H1 (cell line): ENCODE measurements at regions of chr10 and their contacts with region 1.

Region 1: GRCh38 chr10:93224005-93224779 is 150.5 kb downstream of the CYP26A1 start:
- DNase-seq: no peak
- H3K4me3 ChIP-seq: no peak overlapping the region
- H3K27ac ChIP-seq: no peak overlapping the region
- H3K4me1 ChIP-seq: no peaks in the 10 kb centered on the region; a peak in 1 of 7 replicates
- H3K27me3 ChIP-seq: no peaks in the 10 kb centered on the region
- CTCF ChIP-seq: peak; percentile 12 to 25 (median 18); a peak in 3 of 4 replicates
- EP300 ChIP-seq: no peak
- POLR2A ChIP-seq: no peak
- RAD21 ChIP-seq: peak; percentile 39 to 57

Region 2: DNA sequence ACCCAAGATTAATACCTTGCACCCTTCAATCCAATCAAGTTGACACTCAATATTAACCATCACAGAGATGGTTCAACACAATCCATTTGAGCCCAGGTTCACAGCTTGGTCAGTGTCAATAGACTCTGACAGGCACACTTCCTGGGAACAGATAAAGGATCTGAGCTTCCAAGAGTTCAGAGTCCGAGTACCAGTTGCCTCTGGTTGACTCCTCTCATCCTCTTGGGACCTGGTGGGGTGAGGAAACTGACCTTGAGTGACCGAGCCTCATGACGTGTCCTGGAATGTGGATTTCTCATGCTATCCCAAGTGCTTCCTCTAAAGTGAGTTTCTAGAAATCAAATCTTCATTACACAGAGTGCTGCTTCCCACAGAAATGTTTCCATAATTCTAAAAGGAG is 11.5 kb after region 1 on chr10:
- CTCF ChIA-PET with region 1: interaction called, 31 read pairs
- POLR2A ChIA-PET with region 1: no interaction called
- DNase-seq: no peak
- H3K4me3 ChIP-seq: no peak overlapping the region
- H3K27ac ChIP-seq: no peak overlapping the region
- H3K4me1 ChIP-seq: no peaks in the 10 kb centered on the region
- H3K27me3 ChIP-seq: no peaks in the 10 kb centered on the region
- CTCF ChIP-seq: no peak
- EP300 ChIP-seq: no peak
- POLR2A ChIP-seq: no peak
- RAD21 ChIP-seq: no peak

Region 3: GRCh38 chr10:93288654-93289634 is 64.8 kb after region 1 on chr10:
- CTCF ChIA-PET with region 1: interaction called, 10 read pairs
- POLR2A ChIA-PET with region 1: no interaction called
- DNase-seq: peak; percentile 85
- H3K4me3 ChIP-seq: no peak overlapping the region; a peak in 1 of 8 replicates
- H3K27ac ChIP-seq: peak overlapping the region; percentile 52; the same call in 1 of the 2 replicates
- H3K4me1 ChIP-seq: peaks cover 0 to 11% (median 3%) of the 10 kb centered on the region in 4 experiments; a peak in 5 of 7 replicates
- H3K27me3 ChIP-seq: no peaks in the 10 kb centered on the region; a peak in 1 of 7 replicates
- CTCF ChIP-seq: peak; percentile 60 to 87 (median 86)
- EP300 ChIP-seq: peak in 1 of 2 experiments; percentile 45; a peak in 1 of 3 replicates
- POLR2A ChIP-seq: no peak
- RAD21 ChIP-seq: peak; percentile 97 to 98